Naive thymus-derived CD4-positive, alpha-beta T cell (primary cell): ENCODE measurements at regions of chr6 and their contacts with region 1.

Region 1: DNA sequence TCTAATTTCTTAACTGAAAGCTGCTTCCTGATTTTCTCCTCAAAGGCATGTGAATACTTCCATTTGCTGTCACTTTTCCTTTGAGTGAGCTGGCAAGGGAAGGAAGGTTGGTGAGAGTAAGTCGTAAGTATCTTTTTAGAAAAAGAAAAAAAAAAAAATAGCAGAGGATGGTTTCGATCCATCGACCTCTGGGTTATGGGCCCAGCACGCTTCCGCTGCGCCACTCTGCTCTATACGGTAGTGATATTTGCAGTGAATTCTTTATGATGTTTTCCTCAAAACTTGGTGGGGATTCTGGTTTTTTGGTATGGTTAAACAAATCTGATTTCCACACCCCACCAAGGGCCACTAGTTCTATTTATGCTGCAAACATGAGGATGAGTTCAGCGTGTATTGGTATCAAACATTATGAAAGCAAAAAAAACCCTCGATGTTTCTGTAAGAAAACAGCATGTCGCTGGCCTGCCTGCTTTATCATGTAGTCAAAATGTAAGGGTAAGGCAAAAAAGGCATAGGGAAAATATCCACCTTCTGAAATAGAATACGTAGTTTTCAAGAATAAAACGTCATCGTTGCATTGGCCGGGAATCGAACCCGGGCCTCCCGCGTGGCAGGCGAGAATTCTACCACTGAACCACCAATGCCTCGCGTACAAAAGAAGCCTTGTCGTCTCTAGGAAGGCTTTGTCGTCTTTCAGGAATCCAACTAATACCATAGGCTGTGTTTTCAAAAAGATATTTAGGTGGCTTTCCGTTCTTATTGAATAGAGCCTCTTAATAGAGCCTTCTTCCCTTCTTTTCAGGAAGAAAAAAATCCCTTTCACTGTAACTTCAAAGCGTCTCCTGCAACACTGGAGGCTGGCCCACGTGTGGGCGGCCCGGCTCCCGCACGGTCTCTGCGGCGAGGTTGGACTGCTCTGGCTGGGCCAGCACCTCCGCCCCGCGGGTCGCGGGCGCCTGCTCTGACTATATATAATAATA is 9.6 kb downstream of the OR2B2 start:
- DNase-seq: peak; percentile 75 to 94 (median 90)
- ATAC-seq: peak; percentile 92
- H3K4me3 ChIP-seq: peak overlapping the region; percentile 95
- H3K4me3 Mint-ChIP-seq: peak overlapping the region; percentile 75 to 97 (median 91)
- H3K27ac ChIP-seq: peak overlapping the region; percentile 82
- H3K27ac Mint-ChIP-seq: peak overlapping the region; percentile 95 to 99 (median 99)
- H3K4me1 ChIP-seq: peaks cover 0 to 3% of the 10 kb centered on the region in 2 donors
- H3K4me1 Mint-ChIP-seq: peaks cover 0 to 26% (median 15%) of the 10 kb centered on the region in 7 donors
- H3K27me3 ChIP-seq: no peaks in the 10 kb centered on the region
- H3K27me3 Mint-ChIP-seq: peaks cover 4 to 35% (median 13%) of the 10 kb centered on the region in 5 donors

Region 2: DNA sequence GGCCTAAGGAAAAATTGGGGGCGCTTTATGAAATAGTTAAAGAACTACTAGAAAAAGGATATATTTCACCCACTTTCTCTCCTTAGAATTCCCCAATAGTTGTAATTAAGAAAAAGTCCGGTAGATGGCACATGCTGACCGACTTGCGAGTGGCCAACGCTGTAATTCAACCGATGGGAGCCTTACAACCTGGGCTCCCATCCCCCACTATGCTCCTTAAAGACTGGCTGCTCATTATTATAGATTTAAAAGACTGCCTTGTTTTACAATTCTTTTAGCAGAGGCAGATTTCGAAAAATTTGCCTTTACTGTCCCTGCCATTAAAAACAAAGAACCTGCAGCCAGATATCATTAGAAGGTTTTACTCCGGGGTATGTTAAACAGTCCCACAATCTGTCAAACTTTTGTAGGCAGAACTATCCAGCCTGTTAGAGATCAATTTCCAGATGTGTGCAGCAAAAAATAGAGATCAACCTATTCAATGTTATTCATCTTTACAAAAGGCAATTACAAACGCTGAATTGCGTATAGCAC is 713.7 kb before region 1 on chr6:
- CTCF ChIA-PET with region 1: no interaction called
- POLR2A ChIA-PET with region 1: no interaction called
- intact Hi-C with region 1: loop called in 1 of 2 experiments (anchors 2 kb)
- DNase-seq: peak in 8 of 9 donors; percentile 44 to 69 (median 65)
- ATAC-seq: peak; percentile 90
- H3K4me3 ChIP-seq: peak overlapping the region; percentile 81
- H3K4me3 Mint-ChIP-seq: peak overlapping the region; percentile 82 to 99 (median 93)
- H3K27ac ChIP-seq: peak overlapping the region; percentile 58
- H3K27ac Mint-ChIP-seq: peak overlapping the region in 8 of 9 donors; percentile 44 to 79 (median 64)
- H3K4me1 ChIP-seq: peaks cover 3% of the 10 kb centered on the region in 2 donors
- H3K4me1 Mint-ChIP-seq: peaks cover 9 to 20% (median 15%) of the 10 kb centered on the region in 7 donors
- H3K27me3 ChIP-seq: no peaks in the 10 kb centered on the region
- H3K27me3 Mint-ChIP-seq: peaks cover 0 to 3% (median 0%) of the 10 kb centered on the region in 5 donors

Region 3: DNA sequence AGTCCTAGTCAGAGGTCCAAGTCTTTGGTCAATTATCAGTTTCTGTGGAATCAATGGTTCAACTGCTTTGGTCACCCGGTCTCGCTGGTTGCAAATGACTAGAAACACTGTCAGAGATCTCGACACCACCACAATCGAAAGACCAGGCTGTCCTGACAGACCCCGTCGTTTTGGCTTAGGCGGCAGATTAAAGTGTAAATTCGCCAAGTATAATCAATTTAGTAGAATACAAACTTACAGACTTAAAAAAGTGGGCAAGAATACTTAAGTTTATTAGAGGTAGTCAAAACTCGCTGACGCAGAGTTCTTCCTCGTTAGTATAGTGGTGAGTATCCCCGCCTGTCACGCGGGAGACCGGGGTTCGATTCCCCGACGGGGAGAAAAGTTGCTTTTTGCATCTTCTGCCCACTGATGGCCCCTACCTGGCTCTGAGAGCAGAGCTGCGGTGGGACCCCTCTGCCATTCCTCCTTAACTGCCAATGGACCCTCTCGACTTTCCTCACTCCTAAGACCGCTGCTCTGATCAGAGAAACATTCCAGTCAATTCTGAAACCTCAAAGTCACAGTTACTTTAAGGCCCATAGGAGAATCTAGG is 399.1 kb before region 1 on chr6:
- CTCF ChIA-PET with region 1: no interaction called
- POLR2A ChIA-PET with region 1: interaction called, 3 read pairs
- intact Hi-C with region 1: loop called in 1 of 2 experiments (anchors 1 kb)
- DNase-seq: peak; percentile 73 to 86 (median 80)
- ATAC-seq: peak; percentile 75
- H3K4me3 ChIP-seq: peak overlapping the region; percentile 61
- H3K4me3 Mint-ChIP-seq: peak overlapping the region; percentile 85 to 99 (median 91)
- H3K27ac ChIP-seq: peak overlapping the region; percentile 57
- H3K27ac Mint-ChIP-seq: peak overlapping the region; percentile 82 to 97 (median 91)
- H3K4me1 ChIP-seq: peaks cover 6% of the 10 kb centered on the region in 2 donors
- H3K4me1 Mint-ChIP-seq: peaks cover 15 to 41% (median 36%) of the 10 kb centered on the region in 7 donors
- H3K27me3 ChIP-seq: no peaks in the 10 kb centered on the region
- H3K27me3 Mint-ChIP-seq: peaks cover 5 to 62% (median 11%) of the 10 kb centered on the region in 5 donors

Region 4: DNA sequence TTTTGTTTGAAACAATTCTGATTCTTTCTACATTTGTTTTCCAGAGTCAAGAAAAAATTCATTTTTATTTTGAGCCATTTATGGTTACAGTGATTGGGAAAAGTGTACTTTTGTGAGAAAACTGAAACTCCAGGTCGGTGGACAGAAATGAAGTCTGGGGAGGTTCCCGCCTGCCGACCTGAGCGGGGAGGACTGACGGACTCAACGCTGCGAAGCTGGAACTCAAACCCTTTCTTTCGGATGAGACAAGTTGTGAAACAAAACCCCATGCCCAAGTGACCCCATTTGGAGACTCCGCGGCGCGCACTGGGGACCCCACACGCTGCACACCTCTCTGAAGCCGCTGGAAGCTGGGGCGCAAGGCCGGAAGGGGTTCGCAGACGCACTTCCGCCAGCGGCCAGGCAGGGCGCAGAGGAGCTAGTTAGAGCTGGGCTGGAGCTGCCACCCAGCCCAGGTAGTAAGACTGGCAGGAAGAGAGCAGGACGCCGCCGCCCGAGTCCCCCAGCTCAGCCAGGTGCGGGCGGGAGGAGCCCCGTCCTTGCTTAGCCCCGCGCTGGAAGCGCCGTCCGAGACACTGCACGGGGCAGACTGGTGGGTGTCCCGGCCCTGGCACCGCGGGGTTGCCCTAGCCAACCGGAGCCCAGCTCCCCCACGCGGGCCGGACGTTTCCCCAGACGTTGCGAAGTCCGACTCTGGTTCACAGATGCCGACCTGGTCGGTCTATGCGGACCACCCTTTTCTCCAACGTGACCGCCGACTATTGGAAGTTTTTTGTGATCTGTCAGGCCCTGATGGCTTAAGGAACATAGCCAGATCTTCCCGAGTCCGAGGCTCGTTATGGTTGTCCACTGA is 202.0 kb after region 1 on chr6:
- CTCF ChIA-PET with region 1: no interaction called
- POLR2A ChIA-PET with region 1: interaction called, 3 read pairs
- intact Hi-C with region 1: loop called in 1 of 2 experiments (anchors 10 kb)
- DNase-seq: peak; percentile 68 to 82 (median 79)
- ATAC-seq: peak; percentile 99
- H3K4me3 ChIP-seq: peak overlapping the region; percentile 79
- H3K4me3 Mint-ChIP-seq: peak overlapping the region; percentile 86 to 95 (median 92)
- H3K27ac ChIP-seq: peak overlapping the region; percentile 76
- H3K27ac Mint-ChIP-seq: peak overlapping the region; percentile 76 to 96 (median 94)
- H3K4me1 ChIP-seq: peaks cover 0 to 7% of the 10 kb centered on the region in 2 donors
- H3K4me1 Mint-ChIP-seq: peaks cover 6 to 19% (median 9%) of the 10 kb centered on the region in 7 donors
- H3K27me3 ChIP-seq: no peaks in the 10 kb centered on the region
- H3K27me3 Mint-ChIP-seq: peaks cover 0 to 26% (median 16%) of the 10 kb centered on the region in 5 donors

Region 5: DNA sequence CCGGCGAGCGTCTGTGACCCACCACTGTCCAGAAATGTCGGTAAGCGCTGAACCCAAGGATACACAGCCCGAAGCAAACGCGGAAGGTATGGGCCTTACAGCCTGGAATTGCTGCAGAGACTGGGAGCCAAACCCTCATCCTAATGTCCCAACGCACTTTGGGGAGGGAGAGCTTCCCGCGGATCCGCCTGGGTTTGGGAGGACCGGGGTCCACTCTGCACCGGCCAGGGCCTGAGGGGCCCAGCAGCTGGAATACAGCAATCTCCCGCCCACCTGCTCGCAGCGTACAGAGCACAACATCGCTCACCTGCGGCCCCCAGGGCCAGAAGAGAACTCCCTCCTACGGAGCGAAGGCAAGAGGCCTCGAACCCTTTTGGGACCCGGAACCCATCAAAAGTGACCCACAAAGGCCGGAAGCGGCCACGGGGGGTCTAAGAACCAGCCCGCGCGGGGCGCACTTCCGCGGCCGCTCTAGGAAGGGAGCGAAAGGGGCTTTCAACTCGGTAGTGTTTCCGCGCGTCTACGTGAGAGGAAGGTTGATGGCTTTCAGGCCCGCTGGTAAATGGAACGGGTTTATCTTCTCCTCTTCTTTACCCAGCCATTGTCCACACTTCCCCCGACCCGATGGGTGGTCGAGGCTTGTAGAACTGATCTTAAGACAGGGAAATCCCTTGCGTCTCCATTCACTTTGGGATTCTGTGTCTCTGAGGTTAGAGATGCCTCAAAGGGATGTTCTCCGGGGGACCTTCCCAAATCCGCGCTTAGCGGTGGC is 496.9 kb after region 1 on chr6 and contains the start of gene ZSCAN12:
- CTCF ChIA-PET with region 1: no interaction called
- POLR2A ChIA-PET with region 1: no interaction called
- intact Hi-C with region 1: loop called in 1 of 2 experiments (anchors 5 kb)
- DNase-seq: peak; percentile 73 to 87 (median 81)
- ATAC-seq: peak; percentile 97
- H3K4me3 ChIP-seq: peak within 1 kb of the TSS; percentile 88
- H3K4me3 Mint-ChIP-seq: peak within 1 kb of the TSS; percentile 84 to 96 (median 92)
- H3K27ac ChIP-seq: peak within 1 kb of the TSS; percentile 74
- H3K27ac Mint-ChIP-seq: peak within 1 kb of the TSS; percentile 77 to 96 (median 93)
- H3K4me1 ChIP-seq: peaks cover 8 to 30% of the 10 kb centered on the region in 2 donors
- H3K4me1 Mint-ChIP-seq: peaks cover 30 to 54% (median 47%) of the 10 kb centered on the region in 7 donors
- H3K27me3 ChIP-seq: no peaks in the 10 kb centered on the region
- H3K27me3 Mint-ChIP-seq: peaks cover 0 to 33% (median 22%) of the 10 kb centered on the region in 5 donors
- total RNA-seq, gene ZSCAN12: 2.9 to 10.3 (median 7.4) TPM

Region 6: GRCh38 chr6:29016559-29017427 is 1114.2 kb after region 1 on chr6:
- CTCF ChIA-PET with region 1: no interaction called
- POLR2A ChIA-PET with region 1: no interaction called
- intact Hi-C with region 1: loop called in 1 of 2 experiments (anchors 10 kb)
- DNase-seq: peak; percentile 58 to 81 (median 76)
- ATAC-seq: peak; percentile 88
- H3K4me3 ChIP-seq: peak overlapping the region; percentile 87
- H3K4me3 Mint-ChIP-seq: peak overlapping the region; percentile 83 to 94 (median 92)
- H3K27ac ChIP-seq: peak overlapping the region; percentile 40
- H3K27ac Mint-ChIP-seq: peak overlapping the region; percentile 44 to 87 (median 82)
- H3K4me1 ChIP-seq: peaks cover 3 to 5% of the 10 kb centered on the region in 2 donors
- H3K4me1 Mint-ChIP-seq: peaks cover 13 to 22% (median 19%) of the 10 kb centered on the region in 7 donors
- H3K27me3 ChIP-seq: no peaks in the 10 kb centered on the region
- H3K27me3 Mint-ChIP-seq: peaks cover 4 to 33% (median 17%) of the 10 kb centered on the region in 5 donors